Calu3 (cell line): ENCODE measurements at regions of chr12 and their contacts with region 1.

Region 1: GRCh38 chr12:65232476-65233077 is 45.9 kb upstream of the MSRB3 start:
- DNase-seq: no peak
- H3K4me3 Mint-ChIP-seq: no peak overlapping the region
- H3K27ac Mint-ChIP-seq: no peak overlapping the region
- H3K4me1 Mint-ChIP-seq: peaks cover 8% of the 10 kb centered on the region
- H3K27me3 Mint-ChIP-seq: no peaks in the 10 kb centered on the region
- CTCF ChIP-seq: peak; percentile 56

Region 2: GRCh38 chr12:65121049-65121955 is 111.3 kb before region 1 on chr12 and contains the start of gene WIF1:
- CTCF ChIA-PET with region 1: interaction called, 5 read pairs
- intact Hi-C with region 1: loop called (anchors 5 kb)
- DNase-seq: peak; percentile 55
- H3K4me3 Mint-ChIP-seq: peak within 1 kb of the TSS; percentile 69
- H3K27ac Mint-ChIP-seq: no peak within 1 kb of the TSS
- H3K4me1 Mint-ChIP-seq: peaks cover 8% of the 10 kb centered on the region
- H3K27me3 Mint-ChIP-seq: peaks cover 48% of the 10 kb centered on the region
- CTCF ChIP-seq: peak; percentile 82
- total RNA-seq, gene WIF1: not detected in 2 replicates

Region 3: DNA sequence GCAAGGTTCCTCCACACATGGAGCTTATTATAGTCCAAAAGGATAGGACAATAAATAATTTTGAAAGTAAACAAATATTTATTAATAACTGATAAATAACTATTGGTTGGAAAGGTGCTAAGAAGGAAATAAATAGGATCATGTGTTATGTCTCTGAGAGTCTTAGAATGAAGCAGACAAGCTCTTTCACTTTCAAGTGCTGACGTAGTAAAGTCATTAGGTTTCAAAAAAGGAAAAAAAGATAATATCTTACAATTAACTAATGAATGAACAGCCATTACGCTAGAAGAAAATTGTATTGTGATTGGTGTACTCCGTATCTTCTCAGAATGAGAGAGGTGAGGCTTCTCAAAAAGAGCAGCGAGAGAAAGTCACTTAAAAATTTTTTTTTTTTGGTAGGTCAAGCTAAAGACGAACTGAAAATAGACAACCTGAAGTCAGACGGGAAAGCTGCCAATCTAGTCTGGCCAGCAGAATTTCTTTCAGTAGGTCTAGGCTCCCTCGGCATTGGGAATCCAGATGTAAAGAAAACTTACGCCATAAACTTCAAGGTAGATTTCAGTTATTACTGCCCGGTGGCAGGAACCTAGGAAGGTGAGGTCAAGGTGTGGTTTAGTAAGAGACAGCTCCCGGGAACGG is 63.8 kb before region 1 on chr12:
- CTCF ChIA-PET with region 1: interaction called, 5 read pairs
- intact Hi-C with region 1: loop called (anchors 1 kb)
- DNase-seq: no peak
- H3K4me3 Mint-ChIP-seq: peak overlapping the region; percentile 91
- H3K27ac Mint-ChIP-seq: peak overlapping the region; percentile 98
- H3K4me1 Mint-ChIP-seq: peaks cover 10% of the 10 kb centered on the region
- H3K27me3 Mint-ChIP-seq: no peaks in the 10 kb centered on the region
- CTCF ChIP-seq: no peak